Activated CD4-positive, alpha-beta T cell treated with anti-CD3 and anti-CD28 coated beads for 36 hours (primary cell): ENCODE measurements at regions of chr14 and their contacts with region 1.

Region 1: GRCh38 chr14:26067786-26068459 is 529.9 kb downstream of the NOVA1 start:
- DNase-seq: no peak
- ATAC-seq: no peak
- H3K4me3 Mint-ChIP-seq: no peak overlapping the region
- H3K27ac Mint-ChIP-seq: no peak overlapping the region
- H3K4me1 Mint-ChIP-seq: no peaks in the 10 kb centered on the region
- H3K27me3 Mint-ChIP-seq: no peaks in the 10 kb centered on the region

Region 2: GRCh38 chr14:25371061-25371460 is 696.9 kb before region 1 on chr14:
- CTCF ChIA-PET with region 1: no interaction called
- POLR2A ChIA-PET with region 1: no interaction called
- intact Hi-C with region 1: loop called in 1 of 2 experiments (anchors 5 kb)
- DNase-seq: no peak
- ATAC-seq: no peak
- H3K4me3 Mint-ChIP-seq: no peak overlapping the region
- H3K27ac Mint-ChIP-seq: no peak overlapping the region
- H3K4me1 Mint-ChIP-seq: no peaks in the 10 kb centered on the region
- H3K27me3 Mint-ChIP-seq: no peaks in the 10 kb centered on the region

Region 3: GRCh38 chr14:26163791-26164190 is 95.9 kb after region 1 on chr14:
- CTCF ChIA-PET with region 1: no interaction called
- POLR2A ChIA-PET with region 1: no interaction called
- intact Hi-C with region 1: no loop called
- DNase-seq: no peak
- ATAC-seq: no peak
- H3K4me3 Mint-ChIP-seq: no peak overlapping the region
- H3K27ac Mint-ChIP-seq: no peak overlapping the region
- H3K4me1 Mint-ChIP-seq: no peaks in the 10 kb centered on the region
- H3K27me3 Mint-ChIP-seq: no peaks in the 10 kb centered on the region